ENCODE measurements at regions of chr12 and their contacts with region 1.

Region 1: GRCh38 chr12:108403952-108404351 is 64.8 kb upstream of the CMKLR1 start:
- DNase-seq: no peak

Region 2: DNA sequence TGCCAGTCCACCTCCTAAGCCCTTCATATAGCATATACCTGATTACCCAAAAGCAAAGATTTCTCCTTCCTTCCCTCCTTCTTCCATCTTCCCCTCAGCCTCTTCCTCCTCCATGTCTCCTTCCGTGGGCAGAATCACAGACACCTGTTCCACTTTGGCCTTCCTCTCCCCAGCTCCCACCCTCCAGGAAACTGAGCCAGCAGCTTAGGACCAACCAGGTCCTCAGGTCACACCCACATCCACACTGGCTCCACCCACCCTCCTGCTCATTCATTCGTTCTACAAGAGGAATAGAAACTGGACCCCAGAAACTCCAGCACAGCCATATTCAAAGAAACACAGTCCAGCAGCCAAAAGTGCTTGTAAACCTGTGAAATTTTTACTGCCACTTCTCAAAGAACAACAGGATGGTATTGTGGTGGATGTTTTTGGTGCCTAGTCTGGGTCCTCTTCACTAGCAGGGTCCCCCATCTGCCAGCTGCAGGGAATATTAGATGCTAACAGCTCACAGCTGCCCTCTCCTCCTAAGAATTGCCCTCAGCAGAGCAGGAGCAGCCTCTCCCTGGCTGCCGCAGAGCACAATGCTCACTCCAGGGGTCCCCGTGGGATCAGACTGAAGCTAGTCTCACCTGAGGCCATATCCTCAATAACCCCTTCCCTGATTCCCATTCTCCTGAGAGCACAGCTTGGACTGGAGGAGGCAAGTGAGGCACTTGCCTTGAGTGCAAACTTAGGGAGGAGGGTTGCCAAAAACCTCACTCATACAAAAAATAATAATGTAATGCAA is 83.3 kb before region 1 on chr12:
- intact Hi-C with region 1: no loop called
- DNase-seq: peak; percentile 41

Region 3: GRCh38 chr12:108360487-108360886 is 43.5 kb before region 1 on chr12:
- intact Hi-C with region 1: no loop called
- DNase-seq: no peak

Region 4: GRCh38 chr12:109131154-109132050 is 727.5 kb after region 1 on chr12:
- intact Hi-C with region 1: no loop called
- DNase-seq: no peak

Region 5: DNA sequence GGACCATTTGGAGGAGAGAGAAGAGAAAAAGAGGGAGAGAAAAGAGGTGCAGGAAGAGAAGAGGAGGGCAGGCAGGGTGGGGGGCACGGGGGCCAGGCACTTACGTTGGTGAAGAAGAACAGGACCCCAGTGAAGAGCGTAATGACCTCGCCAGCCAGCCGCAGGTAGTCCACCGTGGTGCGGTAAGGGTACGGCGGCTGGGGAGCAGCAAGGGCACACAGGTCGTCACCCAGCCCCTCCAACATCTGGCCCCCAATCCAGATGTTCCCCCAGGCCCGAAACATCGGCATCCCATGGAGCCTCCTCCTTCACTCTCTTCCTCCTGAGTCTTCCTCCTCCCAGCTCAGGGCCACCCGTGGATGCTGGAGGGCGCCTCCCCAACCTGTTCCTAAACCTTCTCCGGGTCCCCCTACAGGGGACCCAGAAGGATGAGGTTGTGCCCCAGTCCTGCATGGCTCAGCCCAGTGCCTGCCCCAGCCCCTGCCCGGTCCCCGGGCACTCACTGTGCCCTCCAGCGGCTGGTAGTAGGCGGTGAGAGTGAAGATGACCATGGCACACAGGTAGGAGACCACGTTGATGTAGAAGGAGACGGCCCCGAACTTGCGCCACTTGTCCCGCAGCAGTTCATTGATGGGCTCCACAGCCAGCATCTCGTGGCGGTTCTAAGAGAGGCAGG is 1390.0 kb after region 1 on chr12:
- intact Hi-C with region 1: loop called in 1 of 2 experiments (anchors 5 kb)
- DNase-seq: no peak

Measured in posterior vena cava (tissue), 2 donors.